CD4-positive, alpha-beta T cell (primary cell): ENCODE measurements at regions of chr3 and their contacts with region 1.

Region 1: DNA sequence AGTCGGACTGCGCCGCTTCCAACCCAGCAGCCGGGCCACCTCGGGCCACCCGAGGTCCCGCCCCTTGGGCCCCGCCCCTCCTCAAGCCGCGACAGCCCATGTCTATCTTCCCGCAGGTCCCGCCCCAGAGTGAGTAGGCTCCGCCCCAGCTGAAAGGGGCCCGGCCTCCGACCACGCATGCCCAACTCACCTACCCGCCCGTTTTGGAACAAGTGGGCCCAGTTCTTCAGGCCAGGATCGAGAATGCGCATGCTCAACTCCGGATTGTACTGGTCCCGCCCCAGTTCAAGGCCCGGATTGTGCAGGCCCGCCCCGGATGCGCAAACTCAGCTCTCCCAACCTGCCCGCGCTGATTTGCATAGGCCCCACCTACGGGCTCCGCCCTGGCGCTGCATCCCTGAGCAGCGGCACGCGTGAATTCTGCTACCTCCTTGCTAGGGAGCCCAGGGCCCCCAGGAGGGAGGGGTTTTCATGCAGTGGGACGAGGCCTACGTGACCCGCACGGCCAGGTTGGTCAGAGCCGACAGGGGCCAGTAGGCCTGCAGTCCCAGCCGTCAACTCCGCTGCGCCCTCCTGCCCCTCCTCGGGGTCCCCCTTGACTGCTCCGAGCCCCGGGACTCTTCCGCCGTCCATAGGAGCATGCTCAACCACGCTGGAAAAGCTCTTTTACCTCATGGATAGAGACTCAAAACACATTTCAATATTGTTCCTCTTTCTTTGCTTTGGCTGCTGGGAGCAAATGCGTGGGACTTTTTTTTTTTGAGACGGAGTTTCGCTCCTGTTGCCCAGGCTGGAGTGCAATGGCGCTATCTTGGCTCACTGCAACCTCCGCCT is at the start of gene PFKFB4:
- DNase-seq: peak; percentile 98 to 100 (median 99)
- ATAC-seq: peak; percentile 87
- H3K4me3 ChIP-seq: peak within 1 kb of the TSS; percentile 55
- H3K4me3 Mint-ChIP-seq: peak within 1 kb of the TSS; percentile 87
- H3K27ac ChIP-seq: no peak within 1 kb of the TSS
- H3K27ac Mint-ChIP-seq: peak within 1 kb of the TSS; percentile 43
- H3K4me1 ChIP-seq: peaks cover 34% of the 10 kb centered on the region
- H3K4me1 Mint-ChIP-seq: peaks cover 25% of the 10 kb centered on the region
- H3K27me3 ChIP-seq: no peaks in the 10 kb centered on the region
- H3K27me3 Mint-ChIP-seq: no peaks in the 10 kb centered on the region
- CTCF ChIP-seq: no peak
- total RNA-seq, gene PFKFB4: 0.98 to 2.5 TPM

Region 2: DNA sequence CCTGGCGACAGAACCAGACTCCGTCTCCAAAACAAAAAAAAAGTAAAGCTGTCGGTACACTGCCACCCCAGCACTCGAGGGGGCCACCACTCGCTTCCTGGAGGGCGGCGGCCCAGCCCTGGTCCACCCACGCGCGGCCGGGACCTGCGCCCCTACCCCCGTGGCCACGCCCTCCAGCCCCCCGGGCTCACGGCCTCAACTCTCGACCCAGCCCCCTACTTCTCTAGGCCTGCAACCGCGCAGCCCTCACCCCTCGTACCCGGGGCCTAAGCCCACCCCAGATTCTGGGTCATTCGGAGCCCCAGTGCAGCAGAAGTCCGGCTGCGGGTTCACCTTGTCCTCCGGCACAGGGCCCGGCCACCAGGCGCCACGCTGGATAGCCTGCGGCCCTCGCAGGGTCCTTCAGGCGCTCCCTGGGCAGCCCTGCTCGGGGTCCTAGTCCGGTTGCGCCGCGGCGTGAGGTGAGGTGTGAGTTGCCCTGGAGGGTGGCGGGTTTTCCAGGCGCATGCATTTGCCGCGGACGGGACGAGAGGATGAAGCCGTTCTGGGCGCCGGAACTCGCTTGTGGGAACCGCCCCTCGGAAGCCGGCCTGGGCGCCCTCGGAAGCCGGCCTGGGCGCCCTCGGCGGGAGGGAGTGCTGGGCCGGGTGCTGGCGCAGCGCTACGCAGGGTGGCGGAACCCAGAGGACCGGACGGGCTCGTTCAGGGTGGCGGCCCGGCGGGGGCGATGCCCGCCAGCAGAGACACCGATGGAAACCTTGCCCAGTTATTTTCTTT is 255.8 kb before region 1 on chr3:
- CTCF ChIA-PET with region 1: interaction called, 3 read pairs
- POLR2A ChIA-PET with region 1: interaction called, 10 read pairs
- intact Hi-C with region 1: no loop called
- DNase-seq: peak; percentile 75 to 94 (median 89)
- ATAC-seq: peak; percentile 82
- H3K4me3 ChIP-seq: peak within 1 kb of the TSS; percentile 87
- H3K4me3 Mint-ChIP-seq: peak within 1 kb of the TSS; percentile 93
- H3K27ac ChIP-seq: peak within 1 kb of the TSS; percentile 84
- H3K27ac Mint-ChIP-seq: peak within 1 kb of the TSS; percentile 86
- H3K4me1 ChIP-seq: peaks cover 21% of the 10 kb centered on the region
- H3K4me1 Mint-ChIP-seq: peaks cover 48% of the 10 kb centered on the region
- H3K27me3 ChIP-seq: no peaks in the 10 kb centered on the region
- H3K27me3 Mint-ChIP-seq: no peaks in the 10 kb centered on the region
- CTCF ChIP-seq: no peak

Region 3: GRCh38 chr3:48446425-48447193 is 110.4 kb before region 1 on chr3 and contains the start of gene ATRIP:
- CTCF ChIA-PET with region 1: no interaction called
- POLR2A ChIA-PET with region 1: interaction called, 4 read pairs
- intact Hi-C with region 1: loop called in 1 of 2 experiments (anchors 2 kb)
- DNase-seq: peak; percentile 71 to 93 (median 82)
- ATAC-seq: peak; percentile 98
- H3K4me3 ChIP-seq: peak within 1 kb of the TSS; percentile 88
- H3K4me3 Mint-ChIP-seq: peak within 1 kb of the TSS; percentile 93
- H3K27ac ChIP-seq: peak within 1 kb of the TSS; percentile 57 to 77
- H3K27ac Mint-ChIP-seq: peak within 1 kb of the TSS; percentile 86
- H3K4me1 ChIP-seq: peaks cover 31% of the 10 kb centered on the region
- H3K4me1 Mint-ChIP-seq: peaks cover 53% of the 10 kb centered on the region
- H3K27me3 ChIP-seq: no peaks in the 10 kb centered on the region
- H3K27me3 Mint-ChIP-seq: no peaks in the 10 kb centered on the region
- CTCF ChIP-seq: no peak
- total RNA-seq, gene ATRIP: 8.8 to 10.3 TPM

Region 4: GRCh38 chr3:48536116-48536515 is 20.9 kb before region 1 on chr3:
- CTCF ChIA-PET with region 1: no interaction called
- POLR2A ChIA-PET with region 1: no interaction called
- intact Hi-C with region 1: no loop called
- DNase-seq: no peak
- ATAC-seq: no peak
- H3K4me3 ChIP-seq: no peak overlapping the region
- H3K4me3 Mint-ChIP-seq: no peak overlapping the region
- H3K27ac ChIP-seq: no peak overlapping the region
- H3K27ac Mint-ChIP-seq: no peak overlapping the region
- H3K4me1 ChIP-seq: no peaks in the 10 kb centered on the region
- H3K4me1 Mint-ChIP-seq: no peaks in the 10 kb centered on the region
- H3K27me3 ChIP-seq: no peaks in the 10 kb centered on the region
- H3K27me3 Mint-ChIP-seq: no peaks in the 10 kb centered on the region
- CTCF ChIP-seq: no peak

Region 5: DNA sequence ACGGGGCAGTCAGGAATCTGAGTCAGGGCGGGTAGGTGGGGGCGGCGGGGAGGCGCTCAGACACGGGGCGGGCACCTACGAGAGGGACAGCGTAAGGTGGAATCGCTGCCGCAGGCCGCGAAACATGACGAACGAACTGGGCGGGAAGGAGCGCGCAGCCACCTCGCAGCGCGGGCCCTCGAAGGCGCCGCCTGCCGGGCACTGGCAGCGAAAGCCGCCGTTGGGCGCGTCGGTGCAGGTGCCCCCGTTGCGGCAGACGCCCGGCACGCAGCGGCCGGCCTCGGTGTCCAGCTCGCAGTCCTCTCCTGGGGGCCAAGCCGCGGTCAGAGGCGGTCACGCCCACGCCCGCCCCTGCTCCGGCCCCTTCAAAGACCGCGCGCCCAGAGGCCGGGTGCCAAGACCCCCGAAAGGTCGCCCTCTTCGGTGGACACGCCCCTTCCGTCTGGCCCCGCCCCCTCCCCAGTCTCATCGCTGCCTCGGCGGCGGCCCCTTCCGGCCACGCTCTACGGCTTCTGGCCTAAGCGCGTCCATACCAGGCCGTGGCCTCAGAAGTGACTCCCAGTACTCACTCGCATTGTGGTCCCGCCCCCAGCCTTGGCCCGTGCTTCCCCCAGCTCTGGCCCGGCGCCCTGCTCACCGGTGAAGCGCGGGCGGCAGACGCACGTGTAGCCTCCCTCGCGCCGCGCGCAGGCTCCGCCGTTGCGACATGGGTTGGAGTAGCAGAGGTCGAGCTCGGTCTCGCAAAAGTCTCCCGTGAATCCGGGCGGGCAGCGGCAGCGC is 99.2 kb after region 1 on chr3:
- CTCF ChIA-PET with region 1: no interaction called
- POLR2A ChIA-PET with region 1: interaction called, 4 read pairs
- intact Hi-C with region 1: loop called in 1 of 2 experiments (anchors 5 kb)
- DNase-seq: peak; percentile 68 to 94 (median 80)
- ATAC-seq: peak; percentile 85
- H3K4me3 ChIP-seq: peak overlapping the region; percentile 53
- H3K4me3 Mint-ChIP-seq: peak overlapping the region; percentile 82
- H3K27ac ChIP-seq: peak overlapping the region in 1 of 2 donors; percentile 54
- H3K27ac Mint-ChIP-seq: peak overlapping the region; percentile 81
- H3K4me1 ChIP-seq: peaks cover 26% of the 10 kb centered on the region
- H3K4me1 Mint-ChIP-seq: peaks cover 16% of the 10 kb centered on the region
- H3K27me3 ChIP-seq: peaks cover 12 to 14% of the 10 kb centered on the region in 2 experiments
- H3K27me3 Mint-ChIP-seq: peaks cover 27% of the 10 kb centered on the region
- CTCF ChIP-seq: peak; percentile 73